Sciatic nerve (tissue), 2 donors: ENCODE measurements at regions of chr20 and their contacts with region 1.

Region 1: DNA sequence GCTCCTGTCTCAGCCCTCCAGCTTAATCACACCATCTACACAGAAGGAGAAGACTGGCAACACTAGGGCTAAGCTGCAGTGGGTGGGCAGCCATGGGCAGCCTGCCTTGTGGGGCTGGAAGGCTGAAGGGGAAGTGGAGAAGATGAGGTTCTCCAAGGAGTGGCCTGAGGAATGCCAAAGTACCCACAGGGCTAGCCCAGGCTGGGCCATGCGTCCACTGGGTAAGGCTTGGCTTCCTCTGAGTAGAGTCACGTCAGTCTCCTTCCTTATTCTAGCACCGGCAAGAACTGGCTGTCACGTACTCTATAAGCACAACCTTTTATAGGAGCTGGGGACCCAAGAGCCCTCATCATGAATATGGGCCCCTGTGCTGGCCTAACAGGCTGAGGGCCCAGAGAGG is 110.6 kb upstream of the SIRPA start:
- DNase-seq: no peak
- ATAC-seq: no peak

Region 2: DNA sequence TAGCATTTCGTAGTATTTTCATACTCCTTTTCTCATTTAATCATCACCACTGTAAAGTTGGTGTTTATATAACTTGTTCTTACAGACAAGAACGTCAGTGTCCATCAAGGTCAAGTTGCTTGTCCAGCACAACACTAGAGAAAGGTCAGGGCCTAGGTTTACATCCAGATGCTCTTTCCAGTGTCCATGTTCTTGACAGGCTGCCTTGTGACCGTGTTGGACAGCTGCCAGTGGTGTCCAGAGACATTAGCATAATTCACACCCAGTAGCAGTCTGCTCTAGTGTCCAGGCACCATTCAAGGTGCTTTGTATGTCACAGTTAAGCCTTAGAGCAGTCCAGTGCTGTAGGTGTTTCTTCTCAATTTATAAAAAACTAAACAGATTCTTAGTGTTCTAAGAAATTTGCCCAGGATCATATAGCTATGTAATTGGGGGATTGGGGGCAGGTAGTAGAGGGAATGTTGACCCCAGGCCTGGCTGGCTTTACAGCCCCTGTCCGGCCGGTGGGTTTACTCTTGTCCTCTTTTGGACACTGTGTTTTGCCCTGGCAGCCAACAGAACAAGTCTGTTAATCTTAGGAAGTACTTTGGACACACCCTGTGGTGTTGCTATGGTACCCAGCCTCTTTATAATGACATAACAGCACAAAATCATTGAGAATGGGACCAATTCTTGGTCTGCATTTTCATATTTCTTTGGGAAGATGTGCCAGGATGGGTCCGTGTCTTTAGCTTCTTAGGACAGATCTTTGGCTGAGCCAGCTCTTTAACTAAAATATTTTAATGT is 325.0 kb after region 1 on chr20:
- intact Hi-C with region 1: loop called (anchors 10 kb)
- DNase-seq: no peak
- ATAC-seq: peak; percentile 62